ENCODE measurements at regions of chr10 and their contacts with region 1.

Region 1: GRCh38 chr10:93482145-93482834 is at the start of gene MYOF:
- DNase-seq: peak; percentile 78
- H3K4me3 ChIP-seq: peak within 1 kb of the TSS; percentile 90
- H3K27ac ChIP-seq: peak within 1 kb of the TSS; percentile 97
- H3K27me3 ChIP-seq: no peaks in the 10 kb centered on the region
- CTCF ChIP-seq: peak; percentile 62
- polyA plus RNA-seq, gene MYOF: 254 and 275 TPM in 2 replicates

Region 2: GRCh38 chr10:93352638-93353383 is 129.5 kb before region 1 on chr10:
- CTCF ChIA-PET with region 1: interaction called, 37 read pairs
- POLR2A ChIA-PET with region 1: no interaction called
- DNase-seq: no peak
- H3K4me3 ChIP-seq: no peak overlapping the region
- H3K27ac ChIP-seq: no peak overlapping the region
- H3K27me3 ChIP-seq: no peaks in the 10 kb centered on the region
- CTCF ChIP-seq: peak; percentile 57

Region 3: GRCh38 chr10:93386631-93387369 is 95.5 kb before region 1 on chr10:
- CTCF ChIA-PET with region 1: interaction called, 473 read pairs
- POLR2A ChIA-PET with region 1: interaction called, 13 read pairs
- DNase-seq: no peak
- H3K4me3 ChIP-seq: no peak overlapping the region
- H3K27ac ChIP-seq: peak overlapping the region; percentile 47
- H3K27me3 ChIP-seq: no peaks in the 10 kb centered on the region
- CTCF ChIP-seq: no peak

Region 4: GRCh38 chr10:93420091-93420490 is 62.2 kb before region 1 on chr10:
- CTCF ChIA-PET with region 1: interaction called, 10 read pairs
- POLR2A ChIA-PET with region 1: interaction called, 4 read pairs
- DNase-seq: no peak
- H3K4me3 ChIP-seq: no peak overlapping the region
- H3K27ac ChIP-seq: no peak overlapping the region
- H3K27me3 ChIP-seq: no peaks in the 10 kb centered on the region
- CTCF ChIP-seq: no peak

Region 5: DNA sequence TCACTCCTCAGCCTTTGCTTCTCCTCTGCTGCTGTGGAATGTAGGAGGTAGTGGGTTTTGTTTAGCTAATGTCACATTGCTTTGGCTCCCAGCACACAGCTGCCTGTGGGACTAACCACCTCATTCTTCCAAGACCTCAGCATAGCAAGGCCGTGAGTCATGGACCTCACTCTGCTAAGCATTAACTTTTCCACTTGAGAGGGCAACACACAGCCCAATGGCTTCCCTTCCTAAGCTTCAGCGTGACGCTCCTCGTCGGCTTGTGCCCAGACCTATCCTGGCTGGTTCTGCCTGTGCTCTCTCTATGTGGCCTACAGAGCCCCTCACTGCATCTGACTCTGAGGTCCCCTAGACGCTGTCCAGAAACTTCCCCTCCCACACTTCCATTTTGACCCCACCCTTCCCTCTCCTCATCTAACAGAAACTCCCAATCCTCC is 23.5 kb before region 1 on chr10:
- CTCF ChIA-PET with region 1: interaction called, 20 read pairs
- POLR2A ChIA-PET with region 1: interaction called, 15 read pairs
- DNase-seq: peak; percentile 100
- H3K4me3 ChIP-seq: peak overlapping the region; percentile 41
- H3K27ac ChIP-seq: peak overlapping the region; percentile 99
- H3K27me3 ChIP-seq: no peaks in the 10 kb centered on the region
- CTCF ChIP-seq: no peak

Region 6: GRCh38 chr10:93471110-93471651 is 11.1 kb before region 1 on chr10:
- CTCF ChIA-PET with region 1: interaction called, 29 read pairs
- POLR2A ChIA-PET with region 1: interaction called, 13 read pairs
- DNase-seq: peak; percentile 88
- H3K4me3 ChIP-seq: no peak overlapping the region
- H3K27ac ChIP-seq: peak overlapping the region; percentile 99
- H3K27me3 ChIP-seq: no peaks in the 10 kb centered on the region
- CTCF ChIP-seq: no peak

Region 7: DNA sequence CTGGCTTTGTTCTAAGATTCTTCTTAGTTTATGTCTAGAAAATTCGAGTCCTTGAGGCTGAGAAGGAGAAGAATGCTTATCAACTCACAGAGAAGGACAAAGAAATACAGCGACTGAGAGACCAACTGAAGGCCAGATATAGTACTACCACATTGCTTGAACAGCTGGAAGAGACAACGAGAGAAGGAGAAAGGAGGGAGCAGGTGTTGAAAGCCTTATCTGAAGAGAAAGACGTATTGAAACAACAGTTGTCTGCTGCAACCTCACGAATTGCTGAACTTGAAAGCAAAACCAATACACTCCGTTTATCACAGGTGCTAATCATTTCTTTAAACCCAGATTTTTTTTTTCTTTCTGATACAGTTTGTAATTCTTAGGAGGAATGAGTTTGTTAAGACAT is 20.8 kb after region 1 on chr10:
- CTCF ChIA-PET with region 1: interaction called, 36 read pairs
- POLR2A ChIA-PET with region 1: interaction called, 3 read pairs
- DNase-seq: no peak
- H3K4me3 ChIP-seq: no peak overlapping the region
- H3K27ac ChIP-seq: no peak overlapping the region
- H3K27me3 ChIP-seq: no peaks in the 10 kb centered on the region
- CTCF ChIP-seq: no peak

Measured in AG04450 (cell line).